Activated CD4-positive, alpha-beta memory T cell treated with anti-CD3 and anti-CD28 coated beads, Interleukin-2, amount 10 ng/mL, durations not matched to agents 7 days and 5 days (primary cell): ENCODE measurements at regions of chr16 and their contacts with region 1.

Region 1: GRCh38 chr16:67017810-67018488 is 11.0 kb upstream of the CBFB start:
- DNase-seq: peak; percentile 91
- H3K4me3 Mint-ChIP-seq: no peak overlapping the region
- H3K27ac Mint-ChIP-seq: peak overlapping the region; percentile 57
- H3K4me1 Mint-ChIP-seq: peaks cover 41% of the 10 kb centered on the region
- H3K27me3 Mint-ChIP-seq: no peaks in the 10 kb centered on the region

Region 2: GRCh38 chr16:66911112-66911511 is 106.8 kb before region 1 on chr16:
- CTCF ChIA-PET with region 1: no interaction called
- POLR2A ChIA-PET with region 1: no interaction called
- DNase-seq: no peak
- H3K4me3 Mint-ChIP-seq: no peak overlapping the region
- H3K27ac Mint-ChIP-seq: no peak overlapping the region
- H3K4me1 Mint-ChIP-seq: peaks cover 4% of the 10 kb centered on the region
- H3K27me3 Mint-ChIP-seq: peaks cover 10% of the 10 kb centered on the region

Region 3: GRCh38 chr16:66961065-66961744 is 56.7 kb before region 1 on chr16 and contains the start of gene CES3:
- CTCF ChIA-PET with region 1: interaction called, 18 read pairs
- POLR2A ChIA-PET with region 1: interaction called, 4 read pairs
- DNase-seq: peak; percentile 81
- H3K4me3 Mint-ChIP-seq: peak within 1 kb of the TSS; percentile 71
- H3K27ac Mint-ChIP-seq: peak within 1 kb of the TSS; percentile 57
- H3K4me1 Mint-ChIP-seq: peaks cover 44% of the 10 kb centered on the region
- H3K27me3 Mint-ChIP-seq: peaks cover 2% of the 10 kb centered on the region
- total RNA-seq, gene CES3: 6.1 to 6.3 TPM

Region 4: GRCh38 chr16:66988197-66988788 is 29.7 kb before region 1 on chr16 and contains the start of gene CES4A:
- CTCF ChIA-PET with region 1: interaction called, 20 read pairs
- POLR2A ChIA-PET with region 1: interaction called, 81 read pairs
- DNase-seq: no peak
- H3K4me3 Mint-ChIP-seq: no peak within 1 kb of the TSS
- H3K27ac Mint-ChIP-seq: peak within 1 kb of the TSS; percentile 98
- H3K4me1 Mint-ChIP-seq: peaks cover 47% of the 10 kb centered on the region
- H3K27me3 Mint-ChIP-seq: no peaks in the 10 kb centered on the region
- total RNA-seq, gene CES4A: 37.8 to 39.3 TPM

Region 5: GRCh38 chr16:67034487-67034886 is 16.5 kb after region 1 on chr16:
- CTCF ChIA-PET with region 1: interaction called, 88 read pairs
- POLR2A ChIA-PET with region 1: interaction called, 106 read pairs
- DNase-seq: no peak
- H3K4me3 Mint-ChIP-seq: no peak overlapping the region
- H3K27ac Mint-ChIP-seq: no peak overlapping the region
- H3K4me1 Mint-ChIP-seq: peaks cover 70% of the 10 kb centered on the region
- H3K27me3 Mint-ChIP-seq: no peaks in the 10 kb centered on the region

Region 6: DNA sequence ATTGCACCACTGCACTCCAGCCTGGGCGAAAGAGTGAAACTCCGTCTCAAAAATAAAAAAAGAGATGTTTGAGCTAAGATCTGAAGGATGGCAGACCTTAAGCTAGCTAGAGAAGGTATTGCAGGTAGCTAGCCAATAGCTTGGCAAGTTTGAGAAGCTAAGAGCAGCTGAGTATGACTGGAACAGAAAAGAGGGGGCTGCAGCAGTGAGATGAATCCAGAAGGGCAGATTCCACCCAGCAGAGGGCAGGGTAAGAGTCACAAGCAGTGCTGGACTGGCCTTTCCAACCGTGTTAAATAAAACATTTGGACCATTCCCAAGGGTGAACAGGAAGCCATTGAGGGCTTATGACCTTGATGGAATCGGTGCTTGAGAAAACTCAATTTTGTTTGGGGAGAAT is 86.1 kb after region 1 on chr16:
- CTCF ChIA-PET with region 1: interaction called, 88 read pairs
- POLR2A ChIA-PET with region 1: interaction called, 5 read pairs
- DNase-seq: no peak
- H3K4me3 Mint-ChIP-seq: no peak overlapping the region
- H3K27ac Mint-ChIP-seq: peak overlapping the region; percentile 8
- H3K4me1 Mint-ChIP-seq: peaks cover 2% of the 10 kb centered on the region
- H3K27me3 Mint-ChIP-seq: no peaks in the 10 kb centered on the region

Region 7: DNA sequence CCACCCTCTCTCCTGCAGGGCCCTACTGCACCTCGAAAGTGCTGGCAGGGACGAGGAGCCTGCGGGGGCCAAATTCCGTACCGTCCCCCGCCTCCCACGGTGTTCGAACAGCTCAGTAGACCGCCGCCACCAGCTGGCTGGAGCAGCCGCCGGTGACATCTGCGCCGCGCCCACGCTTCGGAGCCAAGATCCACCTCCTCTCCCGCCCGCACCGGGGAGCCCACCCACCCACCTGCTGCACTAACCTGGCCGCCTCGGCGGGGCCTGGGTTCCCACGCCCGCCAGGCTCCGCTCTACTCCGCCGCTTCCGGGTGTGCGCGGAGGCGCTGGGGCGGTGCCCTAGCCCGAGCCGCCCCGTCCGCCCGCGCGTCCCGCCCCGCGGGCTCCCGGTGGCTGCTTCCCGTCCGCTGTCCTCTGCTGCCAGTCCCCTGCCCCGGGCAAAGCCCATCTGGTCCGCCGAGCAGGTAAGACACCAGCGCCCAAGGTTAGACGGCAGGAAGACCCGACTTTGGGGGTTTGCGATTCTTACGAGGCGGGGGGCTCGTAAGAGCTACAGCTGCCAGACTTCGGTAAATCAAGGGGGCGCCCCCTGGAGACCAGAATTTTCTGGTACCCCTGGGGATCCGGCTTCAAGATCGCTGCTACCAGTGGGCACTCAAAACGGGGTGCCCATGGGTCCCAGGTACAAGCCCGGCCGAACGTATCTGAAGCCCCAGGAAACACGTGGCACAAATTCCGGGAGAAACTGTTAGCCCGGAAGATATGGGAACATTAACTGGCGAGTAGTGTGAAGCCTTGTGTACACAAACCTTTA is 141.9 kb after region 1 on chr16 and contains the starts of genes FBXL8 and TRADD:
- CTCF ChIA-PET with region 1: interaction called, 152 read pairs
- POLR2A ChIA-PET with region 1: interaction called, 28 read pairs
- DNase-seq: peak; percentile 86
- H3K4me3 Mint-ChIP-seq: peak within 1 kb of the TSS; percentile 96
- H3K27ac Mint-ChIP-seq: peak within 1 kb of the TSS; percentile 98
- H3K4me1 Mint-ChIP-seq: peaks cover 65% of the 10 kb centered on the region
- H3K27me3 Mint-ChIP-seq: peaks cover 8% of the 10 kb centered on the region
- total RNA-seq, gene FBXL8: 52.3 to 54.4 TPM
- total RNA-seq, gene TRADD: 96.9 to 97.3 TPM